IMR-90 (cell line): ENCODE measurements at regions of chr12 and their contacts with region 1.

Region 1: DNA sequence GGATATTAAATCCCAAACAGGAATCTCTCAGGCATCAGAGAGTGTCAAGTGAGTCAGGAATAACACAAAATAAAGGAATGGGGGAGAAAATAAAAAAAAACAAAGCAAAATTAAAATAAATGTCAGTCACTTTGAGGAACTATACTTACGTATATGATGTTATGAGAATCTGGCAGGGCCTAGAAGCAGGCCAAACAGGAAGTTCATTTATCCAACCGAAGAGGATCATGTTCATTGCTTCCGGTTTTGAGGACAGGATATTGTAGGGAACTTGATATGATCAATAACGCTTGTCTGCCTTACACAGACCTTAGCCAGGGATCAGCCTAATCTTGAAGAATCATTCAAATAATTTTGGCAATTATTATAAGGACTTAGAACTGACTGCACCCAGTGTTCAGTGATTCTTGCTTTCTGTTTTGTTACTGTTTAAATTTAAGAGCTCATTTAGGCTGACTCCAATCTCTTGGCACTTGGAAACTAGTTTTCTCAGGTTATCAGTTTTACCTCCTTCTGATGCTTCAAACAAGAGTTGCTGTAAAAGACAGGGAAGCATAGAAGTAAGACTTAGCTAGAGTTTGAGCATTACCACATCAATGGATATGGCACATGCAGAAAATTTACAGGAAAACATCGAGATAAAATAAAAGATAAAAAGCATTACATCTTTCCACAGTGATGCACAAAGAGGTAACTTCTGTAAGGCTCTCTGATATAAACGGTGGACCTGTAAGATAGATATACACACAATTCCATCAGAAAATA is 53.4 kb downstream of the ZFC3H1 start:
- DNase-seq: no peak
- ATAC-seq: no peak
- H3K4me3 ChIP-seq: no peak overlapping the region
- H3K27ac ChIP-seq: no peak overlapping the region
- H3K4me1 ChIP-seq: no peaks in the 10 kb centered on the region
- H3K27me3 ChIP-seq: no peaks in the 10 kb centered on the region
- CTCF ChIP-seq: no peak
- POLR2A ChIP-seq: no peak
- RAD21 ChIP-seq: no peak

Region 2: GRCh38 chr12:71626098-71626497 is 15.9 kb after region 1 on chr12:
- CTCF ChIA-PET with region 1: no interaction called
- POLR2A ChIA-PET with region 1: no interaction called
- dilution Hi-C with region 1: no loop called
- in situ Hi-C with region 1: no loop called
- intact Hi-C with region 1: loop called (anchors 1 kb)
- DNase-seq: no peak
- ATAC-seq: no peak
- H3K4me3 ChIP-seq: no peak overlapping the region
- H3K27ac ChIP-seq: no peak overlapping the region
- H3K4me1 ChIP-seq: peaks cover 2% of the 10 kb centered on the region; the same call in 1 of the 2 replicates
- H3K27me3 ChIP-seq: no peaks in the 10 kb centered on the region
- CTCF ChIP-seq: no peak
- POLR2A ChIP-seq: no peak
- RAD21 ChIP-seq: no peak

Region 3: DNA sequence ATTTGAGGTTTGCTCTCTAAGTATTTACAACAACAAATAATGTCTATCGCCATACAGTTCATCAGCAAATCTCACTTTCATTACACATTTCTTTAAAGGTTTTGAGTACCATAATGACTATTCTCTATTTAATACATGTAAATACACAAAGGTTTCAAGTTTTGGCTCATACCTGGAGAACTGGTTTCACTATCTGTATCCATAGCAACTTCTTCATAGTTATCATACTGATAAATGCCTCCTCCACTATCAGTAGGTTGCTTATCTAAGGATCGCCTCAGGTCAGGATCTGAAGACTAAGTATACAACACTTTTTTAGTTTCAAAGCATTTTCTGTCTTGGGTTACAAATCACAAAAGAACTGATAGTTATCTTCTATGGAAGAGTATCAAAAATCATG is 32.1 kb after region 1 on chr12:
- CTCF ChIA-PET with region 1: no interaction called
- POLR2A ChIA-PET with region 1: no interaction called
- dilution Hi-C with region 1: no loop called
- in situ Hi-C with region 1: no loop called
- intact Hi-C with region 1: loop called (anchors 5 kb)
- DNase-seq: no peak
- ATAC-seq: no peak
- H3K4me3 ChIP-seq: no peak overlapping the region
- H3K27ac ChIP-seq: no peak overlapping the region
- H3K4me1 ChIP-seq: no peaks in the 10 kb centered on the region
- H3K27me3 ChIP-seq: no peaks in the 10 kb centered on the region
- CTCF ChIP-seq: no peak
- POLR2A ChIP-seq: no peak
- RAD21 ChIP-seq: no peak